Ovary (tissue), 10 donors: ENCODE measurements at regions of chr4 and their contacts with region 1.

Region 1: GRCh38 chr4:179182741-179183140 is 1740.5 kb upstream of the AGA start:
- DNase-seq: no peak
- H3K4me3 ChIP-seq: no peak overlapping the region
- H3K27ac ChIP-seq: no peak overlapping the region
- H3K4me1 ChIP-seq: no peaks in the 10 kb centered on the region
- H3K27me3 ChIP-seq: no peaks in the 10 kb centered on the region
- CTCF ChIP-seq: no peak
- EP300 ChIP-seq: no peak
- POLR2A ChIP-seq: no peak

Region 2: DNA sequence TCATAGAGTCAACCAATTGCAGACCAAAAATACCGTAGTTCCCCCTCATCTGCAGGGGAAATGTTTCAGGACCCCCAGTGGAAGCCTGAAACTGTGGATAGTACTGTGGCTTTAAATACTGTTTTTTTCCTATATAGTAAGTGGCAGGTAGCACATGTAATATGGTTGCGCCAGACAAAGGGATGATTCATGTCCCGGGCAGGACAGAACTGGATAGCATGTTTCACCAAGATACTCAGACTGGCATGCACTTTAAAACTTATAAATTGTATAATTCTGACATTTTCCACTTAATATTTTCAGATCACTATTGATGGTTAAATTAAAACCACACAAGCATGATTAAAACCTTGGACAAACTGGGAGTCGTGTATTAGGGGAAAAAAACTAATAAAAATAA is 1464.2 kb before region 1 on chr4:
- intact Hi-C with region 1: loop called in 1 of 4 experiments (anchors 5 kb)
- DNase-seq: no peak
- H3K4me3 ChIP-seq: no peak overlapping the region
- H3K27ac ChIP-seq: no peak overlapping the region
- H3K4me1 ChIP-seq: no peaks in the 10 kb centered on the region
- H3K27me3 ChIP-seq: no peaks in the 10 kb centered on the region
- CTCF ChIP-seq: no peak
- EP300 ChIP-seq: no peak
- POLR2A ChIP-seq: no peak